ENCODE measurements at regions of chr1 and their contacts with region 1.

Region 1: GRCh38 chr1:117758444-117759316 is 152.8 kb downstream of the TENT5C start:
- DNase-seq: peak; percentile 69
- ATAC-seq: peak; percentile 94
- H3K4me3 ChIP-seq: peak overlapping the region; percentile 37 to 43
- H3K27ac ChIP-seq: no peak overlapping the region
- H3K4me1 ChIP-seq: peaks cover 0 to 12% of the 10 kb centered on the region in 2 experiments; a peak in 2 of 4 replicates
- H3K27me3 ChIP-seq: no peaks in the 10 kb centered on the region
- CTCF ChIP-seq: peak; percentile 65 to 92 (median 83)
- POLR2A ChIP-seq: no peak
- RAD21 ChIP-seq: peak; percentile 72

Region 2: GRCh38 chr1:117067533-117068370 is 690.9 kb before region 1 on chr1:
- CTCF ChIA-PET with region 1: interaction called, 4 read pairs
- POLR2A ChIA-PET with region 1: no interaction called
- RAD21 ChIA-PET with region 1: no interaction called
- intact Hi-C with region 1: loop called (anchors 2 kb)
- DNase-seq: peak; percentile 18
- ATAC-seq: peak; percentile 95
- H3K4me3 ChIP-seq: no peak overlapping the region
- H3K27ac ChIP-seq: no peak overlapping the region
- H3K4me1 ChIP-seq: no peaks in the 10 kb centered on the region
- H3K27me3 ChIP-seq: no peaks in the 10 kb centered on the region
- CTCF ChIP-seq: peak; percentile 69 to 74 (median 69)
- POLR2A ChIP-seq: no peak
- RAD21 ChIP-seq: peak; percentile 89

Region 3: DNA sequence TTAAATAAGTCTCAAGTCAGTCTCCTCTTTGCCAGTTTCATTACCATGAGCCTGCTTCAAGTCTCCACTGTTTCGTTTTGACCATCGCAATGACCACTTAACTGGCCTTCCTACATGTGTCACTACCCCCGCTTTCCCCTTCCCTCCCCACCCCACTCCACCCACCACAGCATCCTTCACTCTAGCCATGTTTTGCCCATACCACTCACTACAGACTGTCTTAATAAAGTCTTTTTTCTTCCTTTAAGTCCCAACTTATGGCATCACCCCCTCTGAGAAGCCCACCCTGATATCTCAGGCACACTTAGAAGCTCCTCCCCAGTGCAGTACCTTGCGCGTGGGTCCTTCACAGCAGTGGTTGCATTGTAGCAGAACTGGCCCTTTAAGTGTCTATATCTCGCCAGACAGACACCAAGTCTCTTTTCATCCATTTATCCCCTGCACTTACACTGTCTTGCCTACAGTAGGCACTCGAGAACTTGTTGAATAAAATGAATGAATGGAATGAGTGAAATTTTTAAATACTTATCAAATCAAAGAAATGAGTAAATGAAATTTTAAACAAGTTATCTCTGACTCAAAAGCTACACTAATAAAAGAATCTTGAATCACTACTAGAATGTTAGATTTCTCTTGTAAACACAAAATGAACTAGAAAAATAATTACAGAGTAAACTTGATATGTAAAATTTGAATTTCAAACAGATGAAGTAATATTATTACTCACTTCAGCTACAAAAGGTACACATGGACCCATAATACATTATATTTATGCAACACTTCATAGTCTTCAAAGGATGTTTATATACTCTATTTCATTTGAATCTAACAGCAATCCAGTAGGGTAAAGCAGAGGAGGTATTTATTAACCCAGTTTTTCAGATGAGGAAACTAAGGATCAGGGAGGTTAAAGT is 446.2 kb before region 1 on chr1:
- CTCF ChIA-PET with region 1: interaction called, 3 read pairs
- POLR2A ChIA-PET with region 1: no interaction called
- RAD21 ChIA-PET with region 1: no interaction called
- intact Hi-C with region 1: loop called (anchors 10 kb)
- DNase-seq: peak; percentile 38
- ATAC-seq: peak; percentile 95
- H3K4me3 ChIP-seq: no peak overlapping the region
- H3K27ac ChIP-seq: no peak overlapping the region
- H3K4me1 ChIP-seq: no peaks in the 10 kb centered on the region
- H3K27me3 ChIP-seq: no peaks in the 10 kb centered on the region
- CTCF ChIP-seq: peak; percentile 11 to 68 (median 61); a peak in 5 of 6 replicates
- POLR2A ChIP-seq: no peak
- RAD21 ChIP-seq: peak; percentile 49

Region 4: DNA sequence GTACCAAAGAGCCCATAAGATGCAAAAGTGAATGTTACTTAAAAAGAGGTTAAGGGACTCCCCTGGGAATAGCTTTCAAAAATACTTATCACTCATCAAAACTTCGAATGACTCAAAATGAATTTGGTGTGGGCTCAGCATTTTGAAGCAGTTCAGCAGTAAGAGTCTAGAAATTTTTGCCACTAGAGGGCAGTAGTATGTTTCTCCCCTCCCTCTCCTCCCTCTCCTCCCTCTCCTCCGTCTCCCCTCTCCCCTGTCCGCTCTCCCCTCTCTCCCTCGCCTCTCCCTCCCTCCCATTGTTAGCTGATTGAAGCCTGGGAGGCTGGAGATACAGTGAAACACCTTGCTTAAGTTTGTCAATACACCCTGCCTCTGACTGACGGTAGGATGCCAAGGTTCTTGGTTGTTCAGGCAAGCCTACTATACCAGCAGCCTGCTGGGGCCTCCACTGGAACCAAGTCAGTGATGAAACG is 223.6 kb before region 1 on chr1:
- CTCF ChIA-PET with region 1: interaction called, 31 read pairs
- POLR2A ChIA-PET with region 1: no interaction called
- RAD21 ChIA-PET with region 1: interaction called, 3 read pairs
- intact Hi-C with region 1: loop called (anchors 1 kb)
- DNase-seq: peak; percentile 35
- ATAC-seq: peak; percentile 94
- H3K4me3 ChIP-seq: no peak overlapping the region
- H3K27ac ChIP-seq: no peak overlapping the region
- H3K4me1 ChIP-seq: peaks cover 2 to 8% of the 10 kb centered on the region in 2 experiments; a peak in 1 of 4 replicates
- H3K27me3 ChIP-seq: no peaks in the 10 kb centered on the region
- CTCF ChIP-seq: peak; percentile 27 to 78 (median 67); a peak in 5 of 6 replicates
- POLR2A ChIP-seq: no peak
- RAD21 ChIP-seq: peak; percentile 52

Region 5: DNA sequence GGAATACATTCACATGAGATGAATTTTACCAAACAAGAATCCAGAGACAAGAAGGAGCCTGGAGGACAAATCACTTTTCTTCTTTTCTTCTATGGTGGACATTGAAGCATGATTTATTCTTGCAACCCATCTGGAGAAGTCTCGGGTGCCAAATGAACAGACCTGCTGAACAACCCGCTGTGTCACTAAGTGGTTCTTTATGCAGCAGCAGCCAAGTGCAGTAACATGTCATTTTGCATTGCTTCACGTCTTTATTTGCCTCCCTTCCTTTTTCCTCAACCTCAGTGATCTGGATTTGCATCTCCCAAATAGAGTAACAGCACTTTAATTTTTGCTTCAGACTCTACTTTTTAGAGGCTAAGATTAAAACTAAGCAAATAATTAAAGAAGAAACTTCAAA is 202.9 kb before region 1 on chr1:
- CTCF ChIA-PET with region 1: no interaction called
- POLR2A ChIA-PET with region 1: no interaction called
- RAD21 ChIA-PET with region 1: no interaction called
- intact Hi-C with region 1: no loop called
- DNase-seq: no peak
- ATAC-seq: no peak
- H3K4me3 ChIP-seq: no peak overlapping the region
- H3K27ac ChIP-seq: no peak overlapping the region
- H3K4me1 ChIP-seq: no peaks in the 10 kb centered on the region
- H3K27me3 ChIP-seq: no peaks in the 10 kb centered on the region
- CTCF ChIP-seq: no peak
- POLR2A ChIP-seq: no peak
- RAD21 ChIP-seq: no peak

Region 6: DNA sequence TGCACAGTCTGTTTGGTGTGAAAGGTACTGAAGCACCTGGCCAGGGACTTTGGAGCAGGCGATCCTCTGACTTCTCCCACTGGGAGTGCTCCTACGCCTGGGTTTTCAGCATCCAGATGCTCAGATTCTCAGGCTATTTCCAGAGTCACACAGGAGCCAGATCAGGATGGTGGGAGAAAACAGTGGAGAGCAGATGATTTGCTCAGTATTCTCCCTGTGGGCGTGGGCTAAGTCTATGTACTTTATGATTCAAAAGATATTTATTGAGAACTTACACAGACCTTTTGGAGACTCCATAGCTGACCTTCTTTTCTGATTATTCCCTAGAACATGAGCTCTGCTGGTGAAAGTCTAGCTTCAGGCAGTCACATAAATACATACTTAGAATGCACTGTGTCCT is 18.2 kb before region 1 on chr1:
- CTCF ChIA-PET with region 1: interaction called, 20 read pairs
- POLR2A ChIA-PET with region 1: no interaction called
- RAD21 ChIA-PET with region 1: no interaction called
- intact Hi-C with region 1: no loop called
- DNase-seq: no peak
- ATAC-seq: 0 out of 2 replicates have a peak, but pooled peaks have one; percentile 25
- H3K4me3 ChIP-seq: no peak overlapping the region
- H3K27ac ChIP-seq: no peak overlapping the region
- H3K4me1 ChIP-seq: peaks cover 0 to under 1% of the 10 kb centered on the region in 2 experiments; a peak in 1 of 4 replicates
- H3K27me3 ChIP-seq: no peaks in the 10 kb centered on the region
- CTCF ChIP-seq: no peak
- POLR2A ChIP-seq: no peak
- RAD21 ChIP-seq: no peak

Region 7: GRCh38 chr1:117821782-117822447 is 63.2 kb after region 1 on chr1:
- CTCF ChIA-PET with region 1: no interaction called
- POLR2A ChIA-PET with region 1: no interaction called
- RAD21 ChIA-PET with region 1: no interaction called
- intact Hi-C with region 1: no loop called
- DNase-seq: peak; percentile 12
- ATAC-seq: no peak
- H3K4me3 ChIP-seq: no peak overlapping the region
- H3K27ac ChIP-seq: no peak overlapping the region
- H3K4me1 ChIP-seq: peaks cover 2 to 24% of the 10 kb centered on the region in 2 experiments; a peak in 2 of 4 replicates
- H3K27me3 ChIP-seq: no peaks in the 10 kb centered on the region
- CTCF ChIP-seq: no peak
- POLR2A ChIP-seq: no peak
- RAD21 ChIP-seq: no peak

Region 8: DNA sequence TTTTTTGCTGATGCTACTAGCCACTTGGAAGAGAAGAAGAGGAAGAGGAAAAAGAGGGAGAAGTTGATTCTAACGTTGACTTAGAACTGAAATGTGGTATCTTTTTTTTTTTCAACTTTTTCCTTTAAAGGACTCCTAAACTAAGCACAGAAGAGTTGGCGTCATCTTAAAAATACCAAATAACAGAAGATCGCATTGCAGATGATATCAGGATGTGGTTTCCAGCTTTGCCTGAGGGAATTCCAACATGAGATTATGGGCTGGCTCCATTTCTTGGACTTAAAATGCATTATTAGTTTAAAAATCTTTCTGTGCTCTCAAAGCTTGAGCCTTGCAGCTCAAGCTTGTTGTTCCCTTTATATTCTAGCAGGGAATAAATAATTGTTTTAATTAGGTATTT is 200.7 kb after region 1 on chr1:
- CTCF ChIA-PET with region 1: no interaction called
- POLR2A ChIA-PET with region 1: no interaction called
- RAD21 ChIA-PET with region 1: no interaction called
- intact Hi-C with region 1: no loop called
- DNase-seq: no peak
- ATAC-seq: no peak
- H3K4me3 ChIP-seq: no peak overlapping the region
- H3K27ac ChIP-seq: no peak overlapping the region
- H3K4me1 ChIP-seq: no peaks in the 10 kb centered on the region
- H3K27me3 ChIP-seq: no peaks in the 10 kb centered on the region
- CTCF ChIP-seq: no peak
- POLR2A ChIP-seq: no peak
- RAD21 ChIP-seq: no peak

Region 9: GRCh38 chr1:118461154-118461553 is 702.5 kb after region 1 on chr1:
- CTCF ChIA-PET with region 1: no interaction called
- POLR2A ChIA-PET with region 1: no interaction called
- RAD21 ChIA-PET with region 1: no interaction called
- intact Hi-C with region 1: no loop called
- DNase-seq: no peak
- ATAC-seq: no peak
- H3K4me3 ChIP-seq: no peak overlapping the region
- H3K27ac ChIP-seq: no peak overlapping the region
- H3K4me1 ChIP-seq: no peaks in the 10 kb centered on the region
- H3K27me3 ChIP-seq: no peaks in the 10 kb centered on the region
- CTCF ChIP-seq: peak in 1 of 3 experiments; percentile 14; a peak in 2 of 6 replicates
- POLR2A ChIP-seq: no peak
- RAD21 ChIP-seq: no peak